CD8-positive, alpha-beta T cell (primary cell): ENCODE measurements at regions of chr17 and their contacts with region 1.

Region 1: GRCh38 chr17:64025732-64026294 is 5.4 kb upstream of the ICAM2 start:
- DNase-seq: peak; percentile 85 to 98 (median 94)
- ATAC-seq: peak; percentile 84
- H3K4me3 ChIP-seq: peak overlapping the region; percentile 19 to 37
- H3K4me3 Mint-ChIP-seq: peak overlapping the region; percentile 80
- H3K27ac ChIP-seq: peak overlapping the region; percentile 68 to 92
- H3K27ac Mint-ChIP-seq: peak overlapping the region; percentile 98
- H3K4me1 ChIP-seq: peaks cover 53% of the 10 kb centered on the region
- H3K4me1 Mint-ChIP-seq: peaks cover 58% of the 10 kb centered on the region
- H3K27me3 ChIP-seq: no peaks in the 10 kb centered on the region
- H3K27me3 Mint-ChIP-seq: no peaks in the 10 kb centered on the region
- CTCF ChIP-seq: peak; percentile 94

Region 2: GRCh38 chr17:63842540-63843386 is 183.1 kb before region 1 on chr17 and contains the start of gene SMARCD2:
- CTCF ChIA-PET with region 1: no interaction called
- POLR2A ChIA-PET with region 1: interaction called, 3 read pairs
- intact Hi-C with region 1: loop called (anchors 5 to 10 kb)
- DNase-seq: peak; percentile 99
- ATAC-seq: peak; percentile 91
- H3K4me3 ChIP-seq: peak within 1 kb of the TSS; percentile 86 to 95
- H3K4me3 Mint-ChIP-seq: peak within 1 kb of the TSS; percentile 92
- H3K27ac ChIP-seq: peak within 1 kb of the TSS; percentile 88 to 95
- H3K27ac Mint-ChIP-seq: peak within 1 kb of the TSS; percentile 92
- H3K4me1 ChIP-seq: peaks cover 43% of the 10 kb centered on the region
- H3K4me1 Mint-ChIP-seq: peaks cover 30% of the 10 kb centered on the region
- H3K27me3 ChIP-seq: no peaks in the 10 kb centered on the region
- H3K27me3 Mint-ChIP-seq: no peaks in the 10 kb centered on the region
- CTCF ChIP-seq: no peak
- total RNA-seq, gene SMARCD2: 121 TPM

Region 3: GRCh38 chr17:63946440-63947367 is 79.1 kb before region 1 on chr17:
- CTCF ChIA-PET with region 1: interaction called, 31 read pairs
- POLR2A ChIA-PET with region 1: interaction called, 5 read pairs
- intact Hi-C with region 1: loop called in 1 of 2 experiments (anchors 1 kb)
- DNase-seq: peak; percentile 22 to 77 (median 60)
- ATAC-seq: peak; percentile 78
- H3K4me3 ChIP-seq: peak overlapping the region; percentile 29 to 47
- H3K4me3 Mint-ChIP-seq: peak overlapping the region; percentile 74
- H3K27ac ChIP-seq: peak overlapping the region in 1 of 2 experiments; percentile 43
- H3K27ac Mint-ChIP-seq: peak overlapping the region; percentile 72
- H3K4me1 ChIP-seq: peaks cover 20% of the 10 kb centered on the region
- H3K4me1 Mint-ChIP-seq: peaks cover 20% of the 10 kb centered on the region
- H3K27me3 ChIP-seq: no peaks in the 10 kb centered on the region
- H3K27me3 Mint-ChIP-seq: no peaks in the 10 kb centered on the region
- CTCF ChIP-seq: peak; percentile 69

Region 4: GRCh38 chr17:63998050-63998720 is 27.6 kb before region 1 on chr17 and contains the start of gene PRR29:
- CTCF ChIA-PET with region 1: interaction called, 293 read pairs
- POLR2A ChIA-PET with region 1: interaction called, 20 read pairs
- intact Hi-C with region 1: loop called (anchors 1 kb)
- DNase-seq: peak; percentile 56 to 90 (median 75)
- ATAC-seq: peak; percentile 69
- H3K4me3 ChIP-seq: peak within 1 kb of the TSS; percentile 64 to 78
- H3K4me3 Mint-ChIP-seq: peak within 1 kb of the TSS; percentile 89
- H3K27ac ChIP-seq: no peak within 1 kb of the TSS
- H3K27ac Mint-ChIP-seq: peak within 1 kb of the TSS; percentile 75
- H3K4me1 ChIP-seq: peaks cover 29% of the 10 kb centered on the region
- H3K4me1 Mint-ChIP-seq: peaks cover 40% of the 10 kb centered on the region
- H3K27me3 ChIP-seq: no peaks in the 10 kb centered on the region
- H3K27me3 Mint-ChIP-seq: no peaks in the 10 kb centered on the region
- CTCF ChIP-seq: no peak
- total RNA-seq, gene PRR29: 0.24 to 0.97 TPM

Region 5: DNA sequence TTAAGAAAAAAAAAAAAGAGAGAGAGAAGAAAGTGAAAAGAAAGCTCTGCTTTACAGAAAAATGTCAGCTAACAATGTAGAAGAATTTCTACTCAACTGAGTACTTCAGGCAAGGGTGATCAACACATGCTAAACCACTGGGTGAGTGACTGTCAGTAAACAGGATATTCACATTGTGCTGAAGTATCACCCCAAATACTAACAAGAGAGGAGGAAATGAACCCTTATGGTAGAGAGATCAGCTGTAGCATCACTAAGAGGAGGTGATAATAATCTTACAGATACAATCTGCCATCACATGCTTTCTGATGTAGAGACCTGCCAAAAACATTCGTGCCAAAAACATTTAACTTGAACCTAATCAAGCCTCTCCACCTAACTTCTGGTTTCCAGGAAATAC is 25.3 kb after region 1 on chr17:
- CTCF ChIA-PET with region 1: interaction called, 155 read pairs
- POLR2A ChIA-PET with region 1: interaction called, 11 read pairs
- intact Hi-C with region 1: no loop called
- DNase-seq: peak in 3 of 9 experiments; percentile 10 to 78 (median 67)
- ATAC-seq: peak; percentile 99
- H3K4me3 ChIP-seq: no peak overlapping the region
- H3K4me3 Mint-ChIP-seq: no peak overlapping the region
- H3K27ac ChIP-seq: peak overlapping the region; percentile 6 to 70
- H3K27ac Mint-ChIP-seq: peak overlapping the region; percentile 88
- H3K4me1 ChIP-seq: peaks cover 26% of the 10 kb centered on the region
- H3K4me1 Mint-ChIP-seq: peaks cover 35% of the 10 kb centered on the region
- H3K27me3 ChIP-seq: no peaks in the 10 kb centered on the region
- H3K27me3 Mint-ChIP-seq: no peaks in the 10 kb centered on the region
- CTCF ChIP-seq: no peak

Region 6: DNA sequence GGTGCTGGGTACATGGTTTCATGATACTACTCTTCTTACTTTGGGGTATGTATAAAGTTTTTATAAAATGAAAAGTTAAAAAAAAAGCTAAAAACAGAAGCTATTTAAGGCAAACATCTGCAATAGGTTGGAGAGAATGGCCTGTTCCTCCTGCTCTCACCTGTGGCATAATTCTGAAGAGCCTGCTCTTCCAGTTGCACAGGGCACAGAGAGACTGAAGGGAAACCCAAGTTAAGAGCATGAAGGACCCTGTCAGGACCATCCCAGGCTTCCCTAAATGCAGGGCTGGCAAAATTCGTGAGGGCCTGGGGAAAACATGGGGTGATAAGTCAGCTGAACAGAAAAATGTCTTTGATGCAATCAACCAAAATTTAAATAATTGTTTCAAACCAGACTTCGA is 61.8 kb after region 1 on chr17:
- CTCF ChIA-PET with region 1: interaction called, 10 read pairs
- POLR2A ChIA-PET with region 1: no interaction called
- intact Hi-C with region 1: no loop called
- DNase-seq: no peak
- ATAC-seq: no peak
- H3K4me3 ChIP-seq: no peak overlapping the region
- H3K4me3 Mint-ChIP-seq: no peak overlapping the region
- H3K27ac ChIP-seq: no peak overlapping the region
- H3K27ac Mint-ChIP-seq: no peak overlapping the region
- H3K4me1 ChIP-seq: peaks cover 27% of the 10 kb centered on the region
- H3K4me1 Mint-ChIP-seq: peaks cover 47% of the 10 kb centered on the region
- H3K27me3 ChIP-seq: no peaks in the 10 kb centered on the region
- H3K27me3 Mint-ChIP-seq: no peaks in the 10 kb centered on the region
- CTCF ChIP-seq: no peak

Region 7: GRCh38 chr17:64281962-64282727 is 256.3 kb after region 1 on chr17:
- CTCF ChIA-PET with region 1: interaction called, 5 read pairs
- POLR2A ChIA-PET with region 1: no interaction called
- intact Hi-C with region 1: loop called (anchors 2 kb)
- DNase-seq: peak in 8 of 9 experiments; percentile 25 to 79 (median 51)
- ATAC-seq: peak; percentile 77
- H3K4me3 ChIP-seq: no peak overlapping the region
- H3K4me3 Mint-ChIP-seq: no peak overlapping the region
- H3K27ac ChIP-seq: no peak overlapping the region
- H3K27ac Mint-ChIP-seq: no peak overlapping the region
- H3K4me1 ChIP-seq: no peaks in the 10 kb centered on the region
- H3K4me1 Mint-ChIP-seq: no peaks in the 10 kb centered on the region
- H3K27me3 ChIP-seq: no peaks in the 10 kb centered on the region
- H3K27me3 Mint-ChIP-seq: peaks cover 3% of the 10 kb centered on the region
- CTCF ChIP-seq: peak; percentile 67